Esophagus squamous epithelium (tissue), 5 donors: ENCODE measurements at regions of chr7 and their contacts with region 1.

Region 1: DNA sequence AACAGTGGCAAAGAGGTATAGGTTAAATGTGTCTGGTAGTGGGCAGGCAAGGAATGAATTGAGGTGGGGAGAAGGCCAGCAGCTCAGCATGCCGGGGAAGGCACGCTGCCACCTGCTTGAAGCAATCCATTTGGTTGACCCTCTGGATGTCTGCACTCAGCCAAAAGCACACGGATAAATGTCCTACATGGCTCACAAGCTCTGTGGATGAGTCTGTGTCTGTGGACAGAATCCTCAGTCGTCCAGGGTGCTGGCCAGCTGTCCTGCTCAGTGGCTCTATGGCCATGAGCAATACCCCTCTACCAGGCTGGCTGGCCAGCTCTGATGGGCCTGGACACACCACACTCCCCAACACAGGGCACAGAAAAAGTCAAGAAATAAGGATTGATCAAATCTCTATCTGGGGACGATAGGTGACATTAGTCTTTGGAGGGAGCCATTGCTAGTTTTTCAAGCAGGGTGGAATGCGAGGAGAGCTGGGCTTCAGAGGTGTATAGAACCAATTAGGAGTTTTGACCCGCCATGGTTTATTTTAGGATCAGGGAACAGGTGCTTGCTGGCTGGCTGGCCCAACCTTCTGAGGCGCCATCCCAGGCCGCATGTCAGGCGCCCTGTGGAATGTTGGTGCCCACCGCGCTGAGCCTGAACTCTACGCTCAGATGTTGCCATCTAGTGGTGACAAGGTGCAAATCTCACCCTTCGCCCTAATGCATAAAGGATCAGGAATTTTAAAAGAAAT is 493.4 kb downstream of the TNS3 start:
- DNase-seq: no peak
- H3K4me3 ChIP-seq: no peak overlapping the region
- H3K27ac ChIP-seq: no peak overlapping the region
- H3K4me1 ChIP-seq: peaks cover 0 to 5% (median 0%) of the 10 kb centered on the region in 3 donors
- H3K27me3 ChIP-seq: no peaks in the 10 kb centered on the region
- CTCF ChIP-seq: peak; percentile 58 to 90 (median 78)
- POLR2A ChIP-seq: no peak

Region 2: GRCh38 chr7:45923290-45923689 is 1165.2 kb before region 1 on chr7:
- intact Hi-C with region 1: loop called (anchors 5 kb)
- DNase-seq: no peak
- H3K4me3 ChIP-seq: peak overlapping the region in 2 of 4 donors; percentile 38 to 71
- H3K27ac ChIP-seq: no peak overlapping the region
- H3K4me1 ChIP-seq: peaks cover 22 to 54% (median 27%) of the 10 kb centered on the region in 3 donors
- H3K27me3 ChIP-seq: peaks cover 0 to 73% (median 12%) of the 10 kb centered on the region in 4 donors
- CTCF ChIP-seq: peak; percentile 51 to 88 (median 82)
- POLR2A ChIP-seq: no peak

Region 3: GRCh38 chr7:46352004-46352954 is 736.2 kb before region 1 on chr7:
- intact Hi-C with region 1: loop called (anchors 10 kb)
- DNase-seq: no peak
- H3K4me3 ChIP-seq: no peak overlapping the region
- H3K27ac ChIP-seq: no peak overlapping the region
- H3K4me1 ChIP-seq: no peaks in the 10 kb centered on the region
- H3K27me3 ChIP-seq: no peaks in the 10 kb centered on the region
- CTCF ChIP-seq: peak in 5 of 6 experiments; percentile 40 to 69 (median 51)
- POLR2A ChIP-seq: no peak

Region 4: GRCh38 chr7:46839651-46840050 is 248.8 kb before region 1 on chr7:
- intact Hi-C with region 1: no loop called
- DNase-seq: no peak
- H3K4me3 ChIP-seq: no peak overlapping the region
- H3K27ac ChIP-seq: no peak overlapping the region
- H3K4me1 ChIP-seq: no peaks in the 10 kb centered on the region
- H3K27me3 ChIP-seq: no peaks in the 10 kb centered on the region
- CTCF ChIP-seq: no peak
- POLR2A ChIP-seq: no peak